HEK293 (cell line): ENCODE measurements at regions of chr2 and their contacts with region 1.

Region 1: DNA sequence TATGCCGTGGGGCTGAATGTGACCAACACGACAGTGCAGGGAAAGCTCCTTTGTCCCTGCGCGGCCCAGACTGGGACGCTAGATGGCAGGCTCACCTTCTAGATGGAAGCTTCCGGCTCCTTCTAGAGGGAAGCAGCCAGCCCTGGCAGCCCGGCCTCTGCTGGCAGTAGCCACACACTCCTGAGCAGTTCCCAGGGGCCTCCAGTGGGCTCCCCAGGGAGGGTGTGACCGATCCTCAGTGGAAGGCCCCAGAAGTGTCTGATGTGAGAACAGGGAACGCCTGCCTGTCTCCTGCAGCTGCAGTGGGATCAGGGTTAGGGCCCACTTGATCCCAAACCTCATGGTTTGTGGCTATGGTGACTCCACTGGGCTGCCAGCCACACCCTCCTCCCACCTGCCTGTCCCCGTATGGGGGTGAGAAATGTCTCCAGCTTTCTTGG is 48.5 kb upstream of the LRPPRC start:
- H3K4me3 ChIP-seq: no peak overlapping the region
- H3K27ac ChIP-seq: no peak overlapping the region
- H3K4me1 ChIP-seq: no peaks in the 10 kb centered on the region
- CTCF ChIP-seq: peak; percentile 95

Region 2: DNA sequence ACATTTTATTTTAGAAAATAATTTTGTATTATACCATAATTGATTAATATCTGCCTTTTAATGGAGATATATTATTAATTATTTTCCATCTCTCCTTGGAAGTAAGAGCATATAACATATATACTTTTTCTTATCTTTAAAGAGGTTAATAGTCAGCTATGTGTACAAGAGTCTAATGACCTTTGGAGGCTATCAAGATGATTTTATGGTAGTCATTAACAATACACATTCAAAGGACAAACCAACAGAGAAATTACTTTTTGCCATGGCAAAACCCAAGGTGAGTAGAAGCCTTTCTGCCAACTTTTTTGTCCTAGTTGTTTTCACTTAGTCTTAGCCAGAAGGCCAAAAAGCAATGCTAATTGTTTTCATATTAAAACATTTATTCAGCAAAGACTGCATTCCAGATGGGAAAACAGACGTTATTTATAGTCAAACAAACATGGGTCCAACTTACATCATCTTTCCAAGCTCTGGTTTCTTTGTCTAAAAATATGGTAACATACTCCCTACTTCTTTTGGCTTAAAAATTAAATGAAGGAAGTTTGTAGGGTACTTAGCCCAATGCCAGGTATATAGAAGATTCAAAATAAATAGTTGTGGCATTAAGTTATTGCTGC is 280.1 kb before region 1 on chr2:
- CTCF ChIA-PET with region 1: no interaction called
- POLR2A ChIA-PET with region 1: no interaction called
- H3K4me3 ChIP-seq: no peak overlapping the region
- H3K27ac ChIP-seq: no peak overlapping the region
- H3K4me1 ChIP-seq: no peaks in the 10 kb centered on the region
- CTCF ChIP-seq: no peak

Region 3: GRCh38 chr2:43958397-43959275 is 85.7 kb before region 1 on chr2:
- CTCF ChIA-PET with region 1: no interaction called
- POLR2A ChIA-PET with region 1: no interaction called
- H3K4me3 ChIP-seq: no peak overlapping the region
- H3K27ac ChIP-seq: no peak overlapping the region
- H3K4me1 ChIP-seq: no peaks in the 10 kb centered on the region
- CTCF ChIP-seq: no peak

Region 4: DNA sequence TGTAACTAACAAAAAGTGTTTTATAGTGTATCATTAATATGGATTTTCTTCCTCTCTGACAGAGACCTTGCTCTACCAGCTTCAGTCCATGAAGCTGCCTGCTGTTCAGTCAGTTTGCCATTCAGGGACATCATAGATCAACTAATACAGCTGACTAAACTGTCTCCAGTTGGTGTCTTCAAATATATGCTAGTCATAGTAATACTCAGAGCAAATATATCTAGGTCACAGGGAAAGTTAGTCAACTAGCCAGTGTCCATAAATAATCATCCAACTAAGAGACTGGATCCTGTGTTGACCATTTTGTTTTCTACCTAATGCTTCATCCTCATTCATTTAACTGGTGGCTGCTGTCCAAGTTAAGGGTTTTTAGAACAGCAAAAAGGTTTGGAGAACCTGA is 10.4 kb before region 1 on chr2:
- CTCF ChIA-PET with region 1: interaction called, 10 read pairs
- POLR2A ChIA-PET with region 1: no interaction called
- H3K4me3 ChIP-seq: no peak overlapping the region
- H3K27ac ChIP-seq: no peak overlapping the region
- H3K4me1 ChIP-seq: no peaks in the 10 kb centered on the region
- CTCF ChIP-seq: no peak

Region 5: DNA sequence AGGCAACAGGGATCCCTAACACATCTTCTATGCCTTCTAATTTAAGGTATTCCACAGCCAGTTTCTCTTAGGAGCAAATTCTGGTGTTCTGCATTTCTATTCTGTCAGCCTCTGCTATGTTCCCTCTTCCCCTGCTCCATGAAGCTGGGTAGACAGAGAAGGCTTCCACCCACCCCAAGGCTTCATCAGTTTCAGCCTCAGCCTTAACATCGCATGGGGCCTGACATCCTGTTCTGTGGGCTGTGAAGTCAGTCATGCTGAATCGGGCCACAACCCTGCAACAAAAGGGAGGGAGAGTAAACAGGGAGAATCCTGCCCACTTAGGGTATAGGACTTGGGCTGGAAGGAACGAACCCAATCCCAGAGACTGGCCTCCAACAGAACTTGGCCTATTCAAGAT is 53.7 kb after region 1 on chr2:
- CTCF ChIA-PET with region 1: no interaction called
- POLR2A ChIA-PET with region 1: no interaction called
- H3K4me3 ChIP-seq: no peak overlapping the region
- H3K27ac ChIP-seq: no peak overlapping the region
- H3K4me1 ChIP-seq: no peaks in the 10 kb centered on the region
- CTCF ChIP-seq: no peak

Region 6: DNA sequence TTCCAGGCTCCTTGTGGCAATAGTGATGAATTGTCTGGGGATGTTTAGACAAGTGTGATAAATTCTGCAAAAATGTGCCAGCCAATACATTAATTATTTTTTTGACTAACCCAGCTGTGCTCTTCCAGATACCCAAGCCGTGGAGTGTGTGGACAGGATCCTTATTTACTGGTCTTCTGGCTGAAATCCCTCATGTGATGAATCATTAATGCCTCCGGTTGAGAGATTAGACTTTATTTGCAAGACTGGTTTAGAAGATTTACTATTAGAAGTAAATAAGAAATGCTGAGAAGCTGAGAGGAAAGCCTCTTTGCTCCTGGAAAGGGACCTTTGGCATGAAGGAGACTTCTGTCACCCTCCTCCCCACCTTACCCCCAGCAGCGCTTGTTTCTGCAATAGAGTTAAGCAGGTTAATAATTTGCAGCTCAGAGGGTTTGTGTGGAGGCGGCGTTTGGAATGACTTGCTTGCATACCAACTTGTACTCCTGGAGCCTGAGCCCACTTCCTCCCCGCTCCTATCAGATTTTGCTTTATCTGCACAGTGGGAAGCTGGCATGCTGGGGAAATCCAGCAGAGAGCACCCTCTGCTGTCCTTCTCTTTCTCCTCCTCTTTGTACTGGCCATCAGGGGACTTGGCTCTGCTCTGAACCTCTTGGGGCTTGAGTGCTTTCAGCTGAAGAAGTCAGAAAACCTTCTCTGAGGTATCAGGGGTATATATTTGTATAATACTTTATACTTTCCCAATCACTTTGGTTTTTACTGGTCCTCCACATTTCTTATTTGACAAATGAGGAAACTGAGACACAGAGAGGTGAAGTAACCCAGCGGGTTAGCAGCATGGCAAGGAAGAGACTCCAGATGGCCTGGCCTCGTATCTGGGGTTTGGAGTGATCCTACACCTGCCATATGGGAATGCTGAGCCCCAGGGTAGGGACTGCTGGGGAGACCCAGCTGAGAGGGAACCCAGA is 247.3 kb after region 1 on chr2:
- CTCF ChIA-PET with region 1: interaction called, 22 read pairs
- POLR2A ChIA-PET with region 1: interaction called, 3 read pairs
- H3K4me3 ChIP-seq: no peak overlapping the region; the same call in 1 of the 2 replicates
- H3K27ac ChIP-seq: no peak overlapping the region
- H3K4me1 ChIP-seq: peaks cover 7% of the 10 kb centered on the region; the same call in 1 of the 2 replicates
- CTCF ChIP-seq: peak; percentile 69

Region 7: GRCh38 chr2:44342854-44343253 is 298.6 kb after region 1 on chr2:
- CTCF ChIA-PET with region 1: interaction called, 13 read pairs
- POLR2A ChIA-PET with region 1: no interaction called
- H3K4me3 ChIP-seq: no peak overlapping the region
- H3K27ac ChIP-seq: no peak overlapping the region
- H3K4me1 ChIP-seq: no peaks in the 10 kb centered on the region
- CTCF ChIP-seq: no peak